A673 (cell line): ENCODE measurements at regions of chr18 and their contacts with region 1.

Region 1: DNA sequence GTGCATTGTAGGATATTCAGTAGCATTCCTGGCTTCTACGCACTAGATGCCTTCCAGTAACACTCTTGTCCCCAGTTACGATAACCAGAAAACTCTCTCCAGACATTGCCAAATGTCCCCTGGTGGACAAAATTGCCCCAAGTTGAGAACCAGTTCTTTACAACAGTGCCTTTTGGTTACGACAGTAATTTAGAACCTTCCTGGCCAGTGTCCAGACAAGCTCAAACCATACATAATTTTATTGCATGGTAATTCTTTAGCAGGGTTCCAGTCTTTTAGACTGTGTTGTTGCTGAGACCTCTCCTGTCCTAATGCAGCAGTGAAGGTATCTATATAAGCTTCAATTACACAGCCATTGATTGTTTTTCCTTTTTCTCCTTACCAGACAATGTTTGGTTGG is 20.2 kb downstream of the RNMT start:
- DNase-seq: no peak
- H3K4me3 ChIP-seq: no peak overlapping the region
- H3K27ac ChIP-seq: no peak overlapping the region
- H3K4me1 ChIP-seq: no peaks in the 10 kb centered on the region
- H3K27me3 ChIP-seq: no peaks in the 10 kb centered on the region
- CTCF ChIP-seq: 0 out of 2 replicates have a peak, but pooled peaks have one; percentile 12

Region 2: GRCh38 chr18:13051950-13052349 is 694.7 kb before region 1 on chr18:
- CTCF ChIA-PET with region 1: no interaction called
- POLR2A ChIA-PET with region 1: no interaction called
- intact Hi-C with region 1: no loop called
- DNase-seq: no peak
- H3K4me3 ChIP-seq: no peak overlapping the region
- H3K27ac ChIP-seq: peak overlapping the region; percentile 28
- H3K4me1 ChIP-seq: no peaks in the 10 kb centered on the region
- H3K27me3 ChIP-seq: no peaks in the 10 kb centered on the region
- CTCF ChIP-seq: no peak

Region 3: DNA sequence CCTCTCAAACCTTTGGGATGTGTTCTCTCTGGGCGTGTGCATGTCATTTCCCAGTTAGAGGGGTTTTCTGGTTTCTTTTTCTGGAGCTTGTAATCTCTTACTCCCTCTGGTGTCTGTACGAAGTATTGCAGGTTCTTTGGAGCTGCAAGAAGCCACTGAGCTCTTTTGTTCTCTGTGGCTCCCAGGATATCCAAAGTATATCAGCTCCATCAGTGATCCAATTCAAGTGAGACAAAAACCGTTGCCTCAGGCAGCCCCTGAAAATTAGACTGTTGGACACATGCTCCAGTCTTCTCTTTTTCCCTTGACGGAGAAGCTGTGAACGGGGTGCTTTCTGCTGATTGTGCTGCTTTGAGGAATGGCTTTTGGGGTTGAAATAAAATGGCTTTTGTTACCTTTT is 587.1 kb before region 1 on chr18:
- CTCF ChIA-PET with region 1: no interaction called
- POLR2A ChIA-PET with region 1: no interaction called
- intact Hi-C with region 1: no loop called
- DNase-seq: peak; percentile 82
- H3K4me3 ChIP-seq: no peak overlapping the region
- H3K27ac ChIP-seq: no peak overlapping the region
- H3K4me1 ChIP-seq: no peaks in the 10 kb centered on the region
- H3K27me3 ChIP-seq: no peaks in the 10 kb centered on the region
- CTCF ChIP-seq: peak; percentile 76

Region 4: GRCh38 chr18:13481820-13482617 is 264.6 kb before region 1 on chr18:
- CTCF ChIA-PET with region 1: no interaction called
- POLR2A ChIA-PET with region 1: no interaction called
- intact Hi-C with region 1: no loop called
- DNase-seq: no peak
- H3K4me3 ChIP-seq: no peak overlapping the region
- H3K27ac ChIP-seq: no peak overlapping the region
- H3K4me1 ChIP-seq: no peaks in the 10 kb centered on the region
- H3K27me3 ChIP-seq: no peaks in the 10 kb centered on the region
- CTCF ChIP-seq: no peak

Region 5: DNA sequence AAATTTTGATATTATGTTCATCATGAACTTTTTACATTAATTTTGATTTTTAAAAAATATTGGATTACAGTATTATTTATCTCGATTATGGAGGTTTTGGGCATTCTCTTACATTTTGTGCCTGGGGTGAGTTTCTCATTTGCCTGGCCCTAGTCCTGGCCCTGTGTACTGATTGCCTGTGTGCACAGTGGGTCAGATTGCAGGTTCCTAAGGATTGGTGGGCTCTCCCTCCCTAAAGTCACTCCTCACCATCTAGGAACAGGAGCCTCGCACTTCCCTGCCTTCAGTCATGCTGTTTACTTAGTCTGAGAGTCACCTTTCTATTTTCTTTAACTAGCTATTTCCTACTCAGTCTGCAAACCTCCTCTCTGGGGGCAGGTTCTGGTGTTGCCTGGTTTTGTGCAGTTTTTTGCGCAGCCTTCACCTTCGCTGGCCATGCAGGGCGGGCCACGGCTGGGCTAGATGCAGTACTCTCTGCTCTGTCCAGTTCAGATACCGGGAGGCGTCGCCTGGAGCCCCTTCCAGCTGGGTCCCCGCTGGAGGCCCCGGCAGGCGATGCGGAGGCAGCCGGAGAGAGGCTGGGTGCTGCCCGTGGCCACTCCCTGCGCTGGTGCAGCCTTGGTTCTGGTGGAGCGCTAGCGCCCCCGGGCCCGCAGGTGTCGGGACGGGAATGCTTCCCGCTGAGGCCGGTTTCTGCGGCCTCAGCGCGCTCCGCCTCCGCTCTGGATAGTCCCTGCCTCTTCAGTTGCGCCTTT is 54.0 kb after region 1 on chr18:
- CTCF ChIA-PET with region 1: no interaction called
- POLR2A ChIA-PET with region 1: no interaction called
- intact Hi-C with region 1: loop called (anchors 10 kb)
- DNase-seq: peak; percentile 58
- H3K4me3 ChIP-seq: peak overlapping the region; percentile 9
- H3K27ac ChIP-seq: no peak overlapping the region
- H3K4me1 ChIP-seq: peaks cover 4% of the 10 kb centered on the region
- H3K27me3 ChIP-seq: peaks cover 34% of the 10 kb centered on the region
- CTCF ChIP-seq: peak; percentile 57

Region 6: GRCh38 chr18:13973056-13973575 is 226.5 kb after region 1 on chr18:
- CTCF ChIA-PET with region 1: no interaction called
- POLR2A ChIA-PET with region 1: no interaction called
- intact Hi-C with region 1: no loop called
- DNase-seq: no peak
- H3K4me3 ChIP-seq: no peak overlapping the region
- H3K27ac ChIP-seq: no peak overlapping the region
- H3K4me1 ChIP-seq: no peaks in the 10 kb centered on the region
- H3K27me3 ChIP-seq: no peaks in the 10 kb centered on the region
- CTCF ChIP-seq: no peak